BJ (cell line): ENCODE measurements at regions of chr20 and their contacts with region 1.

Region 1: GRCh38 chr20:50226093-50226974 is 35.7 kb downstream of the CEBPB start:
- DNase-seq: no peak
- H3K4me3 ChIP-seq: no peak overlapping the region
- H3K27me3 ChIP-seq: no peaks in the 10 kb centered on the region
- CTCF ChIP-seq: no peak

Region 2: DNA sequence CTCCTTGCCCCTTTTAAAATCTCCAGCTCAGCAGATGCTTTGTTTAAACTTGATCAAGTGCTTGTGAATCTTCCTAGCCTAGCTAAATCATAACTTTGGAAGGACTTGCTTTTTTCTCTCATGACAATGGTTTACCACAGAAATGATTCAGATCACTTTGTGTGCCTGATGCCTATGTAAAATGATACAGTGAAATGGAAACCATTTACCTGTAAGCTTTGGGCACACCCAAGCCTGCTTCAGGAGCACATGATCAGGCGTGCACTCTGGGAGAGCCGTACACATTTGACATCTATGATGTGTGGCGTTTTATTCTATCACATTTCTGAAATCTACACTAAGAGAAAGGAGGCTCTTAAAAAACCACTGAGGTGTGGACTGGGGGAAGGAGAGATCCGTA is 325.0 kb after region 1 on chr20:
- CTCF ChIA-PET with region 1: no interaction called
- POLR2A ChIA-PET with region 1: interaction called, 10 read pairs
- DNase-seq: no peak
- H3K4me3 ChIP-seq: no peak overlapping the region
- H3K27me3 ChIP-seq: no peaks in the 10 kb centered on the region
- CTCF ChIP-seq: no peak